ENCODE measurements at regions of chr18 and their contacts with region 1.

Region 1: DNA sequence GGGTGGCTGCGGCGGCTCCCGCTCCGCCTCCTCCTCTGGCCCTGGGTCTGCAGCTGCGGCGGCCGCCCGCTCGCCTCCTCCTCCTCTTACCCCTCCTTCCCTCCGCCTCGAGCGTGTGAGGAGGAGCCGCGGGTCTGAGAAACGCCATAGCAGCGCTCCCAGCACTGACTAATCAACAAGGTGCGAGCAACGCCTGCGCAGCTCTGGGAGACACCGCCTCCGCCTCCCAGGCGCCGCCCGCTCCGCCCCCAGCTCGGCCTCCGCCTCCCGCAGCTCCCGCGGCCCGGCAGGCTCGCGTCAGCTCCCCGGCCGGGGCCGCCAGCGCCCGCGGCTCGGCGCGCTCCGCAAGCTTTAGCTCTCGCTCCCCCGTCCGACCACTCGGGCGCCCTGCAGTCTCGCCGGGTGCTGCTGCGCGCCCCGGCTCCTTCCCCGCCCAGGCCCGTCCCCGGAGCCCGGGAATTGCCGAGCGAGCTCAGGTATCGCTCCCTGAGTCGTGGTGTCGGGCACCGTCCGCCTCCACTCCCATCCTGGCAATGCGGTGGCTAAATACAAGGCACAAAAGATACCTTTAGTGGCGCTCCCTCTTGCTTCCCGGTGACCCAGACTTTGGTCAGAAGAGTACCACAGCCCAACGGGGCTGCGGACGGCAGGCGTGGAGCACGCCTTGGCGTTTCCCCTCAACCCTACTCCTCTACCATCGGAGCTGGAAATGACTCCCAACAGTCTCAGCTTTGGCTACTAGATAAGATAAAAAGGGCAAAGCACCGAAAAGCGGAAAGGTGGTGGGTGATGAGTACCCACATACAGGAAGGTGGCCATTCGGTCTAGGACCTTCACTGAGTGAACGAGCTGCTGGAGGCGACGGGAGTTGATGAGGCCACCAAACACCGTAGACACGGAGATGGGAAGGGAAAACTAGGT is at the start of gene GAREM1:
- DNase-seq: peak; percentile 88 to 98 (median 95)

Region 2: DNA sequence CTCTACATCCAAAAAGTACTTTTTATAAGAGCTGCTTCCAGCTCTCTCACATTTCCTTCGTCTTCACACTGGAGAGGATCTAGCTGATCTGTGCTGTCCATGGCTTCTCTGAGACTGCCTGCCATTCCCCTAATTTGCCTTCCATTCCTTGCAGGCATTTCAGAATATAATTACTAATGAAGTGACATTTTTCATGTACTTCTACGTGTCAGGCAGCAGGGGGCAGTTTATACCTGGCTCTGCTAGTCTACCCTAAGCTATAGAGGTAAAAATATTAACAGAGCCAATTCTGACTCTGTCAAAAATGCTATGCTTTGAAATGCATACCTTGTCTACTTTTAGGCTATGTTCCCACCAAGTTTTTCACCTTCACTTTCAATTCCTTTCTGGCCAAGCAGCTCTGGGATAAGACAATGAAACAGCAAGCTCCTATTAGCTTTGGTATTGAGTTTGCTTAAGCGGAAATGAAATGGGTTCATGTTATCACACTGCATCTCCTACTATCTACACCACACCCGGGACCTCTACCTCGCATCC is 199.2 kb before region 1 on chr18:
- intact Hi-C with region 1: loop called (anchors 5 kb)
- DNase-seq: peak in 33 of 42 donors; percentile 15 to 76 (median 50)

Region 3: GRCh38 chr18:32289483-32290075 is 181.4 kb before region 1 on chr18:
- intact Hi-C with region 1: loop called (anchors 2 kb)
- DNase-seq: peak in 34 of 42 donors; percentile 15 to 88 (median 68)

Region 4: DNA sequence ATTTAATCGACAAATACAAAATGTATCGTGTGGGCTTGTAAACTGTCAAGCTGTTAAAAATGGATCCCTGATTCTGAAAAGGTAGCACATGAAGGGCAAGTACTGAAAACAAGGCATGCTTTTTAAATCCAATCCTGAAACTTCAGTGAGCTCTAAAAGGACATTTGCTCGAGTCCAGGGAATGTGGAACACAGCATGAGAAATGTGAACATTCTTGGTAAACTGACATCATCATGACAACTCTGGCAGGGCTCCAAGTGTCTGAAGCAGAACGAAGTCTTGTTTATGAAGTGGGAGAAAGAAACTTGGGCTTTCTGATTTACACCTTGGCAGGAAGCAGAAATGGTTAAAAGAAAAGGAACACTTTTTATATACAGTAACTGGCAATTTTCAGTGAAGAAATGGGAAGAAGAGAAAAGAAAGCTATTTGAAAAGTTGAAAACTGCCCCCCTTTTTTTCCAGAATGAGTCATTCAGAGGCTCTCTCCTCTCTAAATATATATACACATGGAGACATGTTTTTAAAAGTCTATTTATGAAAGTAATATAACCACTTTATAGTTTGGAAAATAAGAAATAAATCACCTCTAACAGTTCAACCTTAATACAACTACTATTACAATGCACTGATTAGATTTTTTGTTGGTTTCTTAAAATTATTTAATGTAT is 121.1 kb before region 1 on chr18:
- intact Hi-C with region 1: loop called (anchors 10 kb)
- DNase-seq: peak in 33 of 42 donors; percentile 27 to 85 (median 53)

Region 5: DNA sequence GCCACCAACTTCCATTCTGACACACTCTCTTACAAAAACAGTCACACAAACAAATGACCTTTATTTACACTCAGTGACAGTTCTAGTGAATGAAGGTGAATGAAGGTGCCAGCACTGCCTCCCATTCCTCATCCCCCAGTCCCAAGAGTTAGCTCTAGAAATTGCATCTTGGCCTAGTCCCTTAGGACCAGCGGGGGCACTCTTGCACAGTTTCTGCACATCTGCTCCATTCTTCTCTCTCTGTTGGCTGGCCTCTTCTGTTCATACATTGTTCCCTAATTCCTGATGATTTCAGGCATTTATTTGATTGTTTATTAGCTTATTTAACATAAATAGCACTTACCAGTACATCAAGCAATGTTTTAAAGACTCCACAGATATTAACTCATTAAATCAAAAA is 31.2 kb before region 1 on chr18:
- intact Hi-C with region 1: loop called (anchors 2 kb)
- DNase-seq: peak in 35 of 42 donors; percentile 26 to 83 (median 57)

Region 6: DNA sequence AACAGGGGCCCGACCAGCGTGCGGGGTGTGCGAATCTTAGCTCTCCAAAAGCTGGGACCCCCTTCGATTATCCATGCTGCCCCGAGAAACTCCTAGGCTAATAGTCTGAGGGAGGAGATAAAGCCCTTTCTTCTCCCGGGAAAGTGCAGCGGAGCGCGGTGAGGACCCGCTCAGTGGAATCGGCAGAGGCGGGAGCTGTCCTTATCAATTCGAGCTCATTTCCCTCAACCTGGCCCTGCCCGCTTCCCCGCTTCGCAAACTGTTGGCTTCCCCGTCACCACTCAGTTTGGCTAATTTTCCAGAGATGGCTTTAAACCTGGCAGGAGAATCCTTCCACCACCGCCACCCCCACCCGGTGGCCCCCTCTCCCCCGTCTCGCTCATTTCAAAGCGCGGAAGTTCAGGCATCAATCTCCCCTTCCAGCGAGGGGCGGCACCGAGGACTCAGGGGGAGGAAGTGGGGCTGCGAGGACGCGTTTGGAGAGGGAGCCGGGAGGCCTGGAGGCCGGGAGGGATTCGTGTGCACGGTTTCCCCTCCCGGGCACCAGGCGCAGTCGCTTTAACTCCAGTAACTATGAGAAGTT is 300.3 kb after region 1 on chr18:
- intact Hi-C with region 1: no loop called
- DNase-seq: peak in 2 of 42 donors; percentile 5 to 22